AG04449 (cell line): ENCODE measurements at regions of chr20 and their contacts with region 1.

Region 1: GRCh38 chr20:13261460-13262301 is 40.6 kb downstream of the ISM1 start:
- DNase-seq: no peak
- H3K4me3 ChIP-seq: no peak overlapping the region
- CTCF ChIP-seq: peak; percentile 84

Region 2: GRCh38 chr20:13231031-13231752 is 30.5 kb before region 1 on chr20:
- CTCF ChIA-PET with region 1: no interaction called
- POLR2A ChIA-PET with region 1: no interaction called
- DNase-seq: peak; percentile 52
- H3K4me3 ChIP-seq: no peak overlapping the region
- CTCF ChIP-seq: no peak

Region 3: DNA sequence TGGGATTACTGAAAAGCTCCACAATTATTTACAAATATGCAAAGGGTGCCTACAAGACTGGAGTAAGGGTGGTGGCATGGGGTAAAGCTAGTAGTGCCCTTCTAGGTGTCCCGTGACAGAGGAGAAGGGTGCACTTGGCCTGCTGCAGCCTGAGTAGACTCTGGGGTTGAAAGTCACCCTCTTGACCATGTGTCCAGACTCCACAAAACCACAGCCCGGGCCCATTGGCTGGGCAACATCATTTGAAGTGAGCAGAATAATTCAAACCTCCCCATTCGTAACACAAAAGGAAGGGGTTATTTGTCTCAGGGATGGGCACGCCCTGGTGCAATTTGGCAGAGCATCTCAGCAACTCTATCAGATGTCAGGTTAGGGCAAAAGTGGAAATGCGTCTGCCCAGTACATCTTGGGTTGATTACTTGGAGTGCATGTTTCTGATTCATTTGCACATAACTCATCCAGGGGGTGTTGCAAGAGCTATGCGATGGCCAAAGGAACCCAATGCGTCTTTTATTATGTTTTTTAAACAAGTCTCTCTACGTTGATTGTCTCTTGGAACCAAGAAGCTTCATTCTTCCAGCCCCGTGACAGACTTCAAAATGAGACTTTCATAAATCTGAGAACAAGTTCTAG is 16.1 kb after region 1 on chr20:
- CTCF ChIA-PET with region 1: interaction called, 14 read pairs
- POLR2A ChIA-PET with region 1: no interaction called
- DNase-seq: no peak
- H3K4me3 ChIP-seq: no peak overlapping the region
- CTCF ChIP-seq: no peak